Activated CD8-positive, alpha-beta memory T cell treated with anti-CD3 and anti-CD28 coated beads, Interleukin-2, amount 10 ng/mL, durations not matched to agents 7 days and 5 days (primary cell): ENCODE measurements at regions of chr16 and their contacts with region 1.

Region 1: GRCh38 chr16:67159593-67160406 is at the starts of genes FBXL8 and TRADD:
- DNase-seq: peak; percentile 89
- ATAC-seq: peak; percentile 76
- H3K4me3 Mint-ChIP-seq: peak within 1 kb of the TSS; percentile 92
- H3K27ac Mint-ChIP-seq: peak within 1 kb of the TSS; percentile 97
- H3K4me1 Mint-ChIP-seq: peaks cover 62% of the 10 kb centered on the region
- H3K27me3 Mint-ChIP-seq: peaks cover 13% of the 10 kb centered on the region
- total RNA-seq, gene FBXL8: 15.7 to 24.5 TPM
- total RNA-seq, gene TRADD: 36.4 to 52.6 TPM

Region 2: GRCh38 chr16:66947302-66948065 is 212.3 kb before region 1 on chr16:
- CTCF ChIA-PET with region 1: interaction called, 10 read pairs
- DNase-seq: peak; percentile 92
- ATAC-seq: peak; percentile 88
- H3K4me3 Mint-ChIP-seq: peak overlapping the region; percentile 79
- H3K27ac Mint-ChIP-seq: peak overlapping the region; percentile 57
- H3K4me1 Mint-ChIP-seq: peaks cover 33% of the 10 kb centered on the region
- H3K27me3 Mint-ChIP-seq: peaks cover 21% of the 10 kb centered on the region

Region 3: DNA sequence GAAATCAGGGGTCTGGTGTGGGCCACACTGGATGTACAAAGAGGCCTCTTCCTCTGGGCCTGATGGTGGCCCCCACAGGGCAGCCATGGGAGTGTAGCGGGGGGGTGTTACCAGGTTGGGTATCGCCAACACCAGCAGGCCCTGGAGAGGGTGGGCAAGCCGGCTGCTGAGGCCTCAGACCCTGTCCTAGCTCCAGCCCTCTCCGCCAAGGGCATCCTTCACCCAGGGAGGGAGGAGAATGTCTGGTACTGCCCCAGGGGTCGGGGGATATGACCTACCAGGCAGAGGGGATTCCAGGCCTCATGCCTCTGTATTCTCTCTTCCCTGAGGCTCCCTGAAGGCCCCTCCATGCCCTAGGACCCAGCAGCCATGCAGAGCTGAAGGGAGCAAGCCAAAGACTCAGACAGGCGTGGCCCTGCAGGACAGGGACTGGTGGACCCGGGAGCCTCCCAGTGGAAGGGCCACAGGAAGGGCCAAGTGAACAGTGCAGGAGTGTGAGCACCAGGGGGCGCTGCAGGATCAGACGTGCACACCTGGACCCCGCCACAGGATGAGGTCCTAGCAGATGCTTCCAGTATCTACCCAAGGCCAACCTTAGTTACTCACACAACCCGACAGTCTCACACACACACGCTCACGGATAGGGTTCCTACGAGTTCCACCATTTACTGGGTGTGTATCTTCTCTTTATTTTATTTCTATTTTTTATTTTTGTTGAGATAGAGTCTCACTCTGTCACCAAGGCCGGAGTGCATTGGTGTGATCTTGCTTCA is 182.3 kb before region 1 on chr16:
- CTCF ChIA-PET with region 1: interaction called, 43 read pairs
- DNase-seq: peak; percentile 93
- ATAC-seq: peak; percentile 99
- H3K4me3 Mint-ChIP-seq: no peak overlapping the region
- H3K27ac Mint-ChIP-seq: peak overlapping the region; percentile 75
- H3K4me1 Mint-ChIP-seq: peaks cover 57% of the 10 kb centered on the region
- H3K27me3 Mint-ChIP-seq: no peaks in the 10 kb centered on the region

Region 4: DNA sequence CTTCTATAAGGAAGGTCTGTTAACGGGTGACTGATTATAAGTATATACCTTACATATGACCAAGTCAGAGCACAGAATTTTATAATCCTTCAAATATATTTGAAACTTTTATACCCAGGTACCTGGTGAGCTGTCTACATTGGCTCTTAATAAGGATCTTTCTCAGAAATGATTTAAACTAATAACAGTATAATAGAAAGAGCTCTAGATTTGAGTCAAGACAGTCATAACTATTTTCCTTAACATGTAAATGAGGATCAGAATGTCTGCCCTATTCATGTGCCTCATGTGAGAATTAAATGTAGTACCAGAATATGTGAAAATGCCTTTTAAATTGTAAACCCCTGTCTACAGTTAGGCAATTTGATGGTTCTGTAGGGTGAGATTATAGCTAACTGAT is 116.4 kb before region 1 on chr16:
- CTCF ChIA-PET with region 1: interaction called, 11 read pairs
- DNase-seq: no peak
- ATAC-seq: no peak
- H3K4me3 Mint-ChIP-seq: no peak overlapping the region
- H3K27ac Mint-ChIP-seq: no peak overlapping the region
- H3K4me1 Mint-ChIP-seq: peaks cover 38% of the 10 kb centered on the region
- H3K27me3 Mint-ChIP-seq: no peaks in the 10 kb centered on the region

Region 5: DNA sequence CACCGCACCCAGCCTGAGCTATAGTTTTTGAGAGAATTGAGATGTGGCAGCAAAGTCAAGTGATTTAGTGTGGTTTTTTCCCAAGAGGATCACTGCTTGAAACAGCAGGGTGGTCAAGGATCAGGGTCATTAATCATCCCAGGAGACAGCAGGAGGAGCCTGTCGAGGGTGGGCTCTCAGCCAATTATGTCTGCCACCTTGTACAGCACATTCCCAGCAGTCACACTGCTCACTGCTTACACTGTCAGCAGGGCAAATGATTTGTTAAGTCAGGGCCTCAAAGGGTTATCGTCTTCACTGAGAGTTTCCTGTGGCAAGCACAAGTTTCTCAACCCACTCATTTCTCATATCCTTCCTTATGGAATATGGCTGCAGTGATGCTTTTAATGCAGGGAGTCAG is 22.2 kb before region 1 on chr16:
- CTCF ChIA-PET with region 1: interaction called, 17 read pairs
- DNase-seq: no peak
- ATAC-seq: no peak
- H3K4me3 Mint-ChIP-seq: no peak overlapping the region
- H3K27ac Mint-ChIP-seq: no peak overlapping the region
- H3K4me1 Mint-ChIP-seq: peaks cover 3% of the 10 kb centered on the region
- H3K27me3 Mint-ChIP-seq: no peaks in the 10 kb centered on the region

Region 6: GRCh38 chr16:67191995-67192681 is 32.3 kb after region 1 on chr16 and contains the start of gene E2F4:
- CTCF ChIA-PET with region 1: interaction called, 10 read pairs
- DNase-seq: peak; percentile 93
- ATAC-seq: peak; percentile 92
- H3K4me3 Mint-ChIP-seq: peak within 1 kb of the TSS; percentile 98
- H3K27ac Mint-ChIP-seq: peak within 1 kb of the TSS; percentile 89
- H3K4me1 Mint-ChIP-seq: peaks cover 52% of the 10 kb centered on the region
- H3K27me3 Mint-ChIP-seq: no peaks in the 10 kb centered on the region
- total RNA-seq, gene E2F4: 147 to 148 TPM

Region 7: DNA sequence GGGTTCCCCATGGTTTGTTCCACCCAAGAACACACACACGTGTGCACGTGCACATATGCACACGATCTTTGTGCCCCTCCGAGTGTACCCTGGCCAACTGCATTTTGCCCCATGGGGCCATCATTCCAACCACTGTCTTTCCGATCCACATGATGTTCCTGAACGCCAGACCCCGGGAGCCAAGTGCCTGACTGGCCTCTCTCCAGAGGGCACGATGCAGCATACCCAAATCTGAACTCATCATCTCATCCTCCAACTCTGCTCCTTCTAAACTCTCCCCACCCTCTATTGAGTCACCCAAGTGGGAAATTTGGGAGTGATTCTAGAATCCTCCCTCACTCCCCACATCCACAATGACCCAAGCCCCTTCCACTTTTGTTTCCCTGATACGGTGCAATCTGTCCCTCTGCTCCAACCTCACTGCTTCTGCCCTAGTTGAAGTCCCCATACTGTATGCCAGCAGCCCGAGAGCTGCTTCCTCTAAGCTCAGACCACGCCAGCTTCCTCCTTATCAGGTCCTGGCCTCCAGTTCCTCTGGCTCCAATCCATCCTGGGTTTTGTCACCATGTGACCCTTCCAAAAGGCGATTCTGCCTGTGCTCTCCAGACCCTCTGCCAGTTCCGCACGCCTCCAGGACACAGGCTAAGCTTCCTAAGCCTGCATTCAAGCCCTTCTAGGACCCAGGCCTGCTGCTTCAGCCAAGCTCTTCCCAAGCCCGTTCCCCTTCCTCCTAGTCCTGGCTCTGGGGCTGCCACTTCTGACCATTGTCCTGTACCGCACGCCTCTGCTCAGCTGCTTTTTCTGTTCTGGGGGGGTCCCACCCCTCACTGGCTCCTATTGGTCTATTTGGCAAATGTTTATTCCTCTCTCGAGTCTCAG is 57.1 kb after region 1 on chr16:
- CTCF ChIA-PET with region 1: no interaction called
- DNase-seq: no peak
- ATAC-seq: no peak
- H3K4me3 Mint-ChIP-seq: no peak overlapping the region
- H3K27ac Mint-ChIP-seq: no peak overlapping the region
- H3K4me1 Mint-ChIP-seq: no peaks in the 10 kb centered on the region
- H3K27me3 Mint-ChIP-seq: no peaks in the 10 kb centered on the region